MCF 10A (cell line): ENCODE measurements at regions of chr3 and their contacts with region 1.

Region 1: GRCh38 chr3:136955813-136956212 is 2.0 kb upstream of the IL20RB start:
- DNase-seq: peak; percentile 63
- H3K4me3 Mint-ChIP-seq: no peak overlapping the region
- H3K27ac Mint-ChIP-seq: peak overlapping the region; percentile 75
- H3K4me1 Mint-ChIP-seq: peaks cover 58% of the 10 kb centered on the region
- H3K27me3 Mint-ChIP-seq: no peaks in the 10 kb centered on the region
- CTCF ChIP-seq: no peak

Region 2: GRCh38 chr3:136196401-136197158 is 759.2 kb before region 1 on chr3:
- CTCF ChIA-PET with region 1: no interaction called
- POLR2A ChIA-PET with region 1: interaction called, 17 read pairs
- intact Hi-C with region 1: no loop called
- DNase-seq: peak; percentile 100
- H3K4me3 Mint-ChIP-seq: peak overlapping the region; percentile 82
- H3K27ac Mint-ChIP-seq: peak overlapping the region; percentile 93
- H3K4me1 Mint-ChIP-seq: peaks cover 16% of the 10 kb centered on the region
- H3K27me3 Mint-ChIP-seq: no peaks in the 10 kb centered on the region
- CTCF ChIP-seq: no peak

Region 3: DNA sequence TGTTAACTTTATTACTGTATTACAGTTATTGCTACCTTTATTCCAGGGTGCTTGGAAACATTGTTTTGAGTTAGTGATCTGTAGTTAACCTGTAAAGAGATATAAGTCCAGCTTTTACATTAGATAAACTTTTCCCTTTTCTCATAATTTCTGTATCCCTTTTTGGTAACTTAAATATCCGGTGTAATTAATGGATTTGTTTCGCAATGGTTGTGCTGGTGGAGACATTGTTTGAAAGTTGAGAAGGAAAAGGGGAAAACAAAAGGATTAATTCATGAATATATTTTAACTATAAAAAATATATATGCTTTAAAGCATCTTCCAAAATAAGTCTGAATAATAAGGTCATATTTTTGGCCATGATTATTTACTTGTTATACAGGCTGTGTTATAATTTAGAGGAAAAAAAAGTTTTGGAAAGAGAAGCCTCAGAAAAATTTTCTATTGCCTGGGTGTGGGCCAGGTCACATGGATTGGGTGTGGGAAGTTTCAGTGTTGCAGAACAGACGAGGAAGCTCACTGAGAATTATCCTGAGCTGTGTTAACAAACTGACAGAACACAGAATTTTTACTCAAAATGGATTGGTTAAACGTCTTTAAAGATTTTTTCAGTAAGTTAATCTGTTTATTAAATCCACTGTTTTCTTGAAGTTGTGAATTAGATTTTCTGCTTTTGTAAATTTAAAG is 25.7 kb before region 1 on chr3:
- CTCF ChIA-PET with region 1: interaction called, 4 read pairs
- POLR2A ChIA-PET with region 1: interaction called, 27 read pairs
- intact Hi-C with region 1: no loop called
- DNase-seq: peak; percentile 78
- H3K4me3 Mint-ChIP-seq: peak overlapping the region; percentile 65
- H3K27ac Mint-ChIP-seq: peak overlapping the region; percentile 69
- H3K4me1 Mint-ChIP-seq: peaks cover 20% of the 10 kb centered on the region
- H3K27me3 Mint-ChIP-seq: no peaks in the 10 kb centered on the region
- CTCF ChIP-seq: no peak

Region 4: DNA sequence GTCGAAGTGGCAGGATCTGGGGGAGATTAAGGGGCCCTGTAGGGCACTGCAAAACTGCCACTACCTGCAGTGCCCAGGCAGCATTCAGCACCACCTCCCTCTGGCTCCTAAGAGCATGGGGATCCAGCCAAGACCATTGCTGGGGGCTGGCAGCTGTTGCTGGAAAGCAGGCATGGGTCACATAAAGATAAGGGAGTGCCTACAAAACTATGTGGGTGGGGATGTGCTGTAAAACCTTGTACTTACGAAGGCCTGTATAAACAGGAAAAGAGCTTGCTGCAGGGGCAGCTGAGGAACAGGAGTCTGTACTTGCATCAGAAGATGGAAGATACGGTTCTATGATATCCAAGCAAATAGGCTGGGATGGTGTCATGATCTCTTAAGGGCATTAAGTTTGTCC is 29.0 kb after region 1 on chr3:
- CTCF ChIA-PET with region 1: interaction called, 11 read pairs
- POLR2A ChIA-PET with region 1: interaction called, 452 read pairs
- intact Hi-C with region 1: no loop called
- DNase-seq: peak; percentile 84
- H3K4me3 Mint-ChIP-seq: peak overlapping the region; percentile 3
- H3K27ac Mint-ChIP-seq: peak overlapping the region; percentile 57
- H3K4me1 Mint-ChIP-seq: peaks cover 63% of the 10 kb centered on the region
- H3K27me3 Mint-ChIP-seq: no peaks in the 10 kb centered on the region
- CTCF ChIP-seq: no peak

Region 5: DNA sequence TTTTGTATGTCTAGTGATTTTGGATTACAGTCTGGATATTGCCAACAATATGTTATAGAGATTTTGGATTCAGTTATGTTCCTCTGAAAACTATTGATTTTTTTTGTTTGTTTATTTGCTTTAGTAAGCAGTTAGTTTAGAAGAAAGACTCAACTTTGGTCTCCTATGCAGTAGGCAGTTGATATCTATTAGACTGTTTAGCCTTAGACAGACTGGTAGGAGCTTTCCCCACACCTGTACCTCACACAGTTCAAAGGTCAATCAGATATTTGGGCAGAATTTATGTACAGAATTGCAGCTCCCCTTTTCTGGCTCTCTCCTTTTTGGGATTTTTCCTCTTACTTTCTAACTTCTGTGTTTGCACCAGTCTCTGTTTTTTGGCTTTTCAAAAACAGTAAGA is 44.2 kb after region 1 on chr3:
- CTCF ChIA-PET with region 1: interaction called, 9 read pairs
- POLR2A ChIA-PET with region 1: interaction called, 259 read pairs
- intact Hi-C with region 1: loop called (anchors 1 kb)
- DNase-seq: no peak
- H3K4me3 Mint-ChIP-seq: no peak overlapping the region
- H3K27ac Mint-ChIP-seq: peak overlapping the region; percentile 75
- H3K4me1 Mint-ChIP-seq: peaks cover 50% of the 10 kb centered on the region
- H3K27me3 Mint-ChIP-seq: no peaks in the 10 kb centered on the region
- CTCF ChIP-seq: no peak

Region 6: GRCh38 chr3:137013955-137014688 is 58.3 kb after region 1 on chr3:
- CTCF ChIA-PET with region 1: interaction called, 59 read pairs
- POLR2A ChIA-PET with region 1: interaction called, 106 read pairs
- intact Hi-C with region 1: no loop called
- DNase-seq: peak; percentile 90
- H3K4me3 Mint-ChIP-seq: no peak overlapping the region
- H3K27ac Mint-ChIP-seq: peak overlapping the region; percentile 46
- H3K4me1 Mint-ChIP-seq: peaks cover 29% of the 10 kb centered on the region
- H3K27me3 Mint-ChIP-seq: no peaks in the 10 kb centered on the region
- CTCF ChIP-seq: peak; percentile 77

Region 7: GRCh38 chr3:137347132-137347531 is 391.3 kb after region 1 on chr3:
- CTCF ChIA-PET with region 1: no interaction called
- POLR2A ChIA-PET with region 1: no interaction called
- intact Hi-C with region 1: no loop called
- DNase-seq: no peak
- H3K4me3 Mint-ChIP-seq: no peak overlapping the region
- H3K27ac Mint-ChIP-seq: no peak overlapping the region
- H3K4me1 Mint-ChIP-seq: no peaks in the 10 kb centered on the region
- H3K27me3 Mint-ChIP-seq: no peaks in the 10 kb centered on the region
- CTCF ChIP-seq: no peak